Heart right ventricle (tissue), 16 donors: ENCODE measurements at regions of chr9 and their contacts with region 1.

Region 1: GRCh38 chr9:36392489-36392888 is 7.6 kb downstream of the RNF38 start:
- DNase-seq: no peak
- ATAC-seq: peak in 3 of 8 donors; percentile 25 to 49 (median 44)
- H3K4me3 ChIP-seq: no peak overlapping the region
- H3K27ac ChIP-seq: no peak overlapping the region
- H3K4me1 ChIP-seq: peaks cover 0 to 83% (median 49%) of the 10 kb centered on the region in 9 donors
- H3K27me3 ChIP-seq: no peaks in the 10 kb centered on the region
- CTCF ChIP-seq: no peak

Region 2: DNA sequence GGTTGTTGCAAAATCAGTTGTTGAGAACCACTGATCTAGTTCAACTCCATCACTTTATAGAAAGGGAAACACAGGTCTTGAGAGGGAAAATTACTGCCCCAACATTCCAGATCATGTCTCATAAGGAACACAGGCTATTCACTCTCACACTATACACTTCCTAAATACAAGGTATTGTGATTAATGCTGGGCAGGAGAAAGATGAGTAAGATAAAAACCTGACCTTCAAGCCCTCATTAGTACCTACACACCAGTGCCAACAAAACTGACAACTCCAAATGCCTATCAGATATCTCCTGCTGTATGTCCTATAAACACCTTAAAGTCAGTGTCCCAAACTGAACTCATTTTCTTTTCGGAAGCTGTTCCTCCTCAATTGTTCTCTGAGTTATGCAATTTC is 142.4 kb before region 1 on chr9:
- intact Hi-C with region 1: loop called in 1 of 10 experiments (anchors 5 kb)
- DNase-seq: no peak
- ATAC-seq: no peak
- H3K4me3 ChIP-seq: no peak overlapping the region
- H3K27ac ChIP-seq: no peak overlapping the region
- H3K4me1 ChIP-seq: peaks cover 0 to 21% (median 7%) of the 10 kb centered on the region in 9 donors
- H3K27me3 ChIP-seq: no peaks in the 10 kb centered on the region
- CTCF ChIP-seq: no peak